Heart right ventricle (tissue), 16 donors: ENCODE measurements at regions of chr1 and their contacts with region 1.

Region 1: DNA sequence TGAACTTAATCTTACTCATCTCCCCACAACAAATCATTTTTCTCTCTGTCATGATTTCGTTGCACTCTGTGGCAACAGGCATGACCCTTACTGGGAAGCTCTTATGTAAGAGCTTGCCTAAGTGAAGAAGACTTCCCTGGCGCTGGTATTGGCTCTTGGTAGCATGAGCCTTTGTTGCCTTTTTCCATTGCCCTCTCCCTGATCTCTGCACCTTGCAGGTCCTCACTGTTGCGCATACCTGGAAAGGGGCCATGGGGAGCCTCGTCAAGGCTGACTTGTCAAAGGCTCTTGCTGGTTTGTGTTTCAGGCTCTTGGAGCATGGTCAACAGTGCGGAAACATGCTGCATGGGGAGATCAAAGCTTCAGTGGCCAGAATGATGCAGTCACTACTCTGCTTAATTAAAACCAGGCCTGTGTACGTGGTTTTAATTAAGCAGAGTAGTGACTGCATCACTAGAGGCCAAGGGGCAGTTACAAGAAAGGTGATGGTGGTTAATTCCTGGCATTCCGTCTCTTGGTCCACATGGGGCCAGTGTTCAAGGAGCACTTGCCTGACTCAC is 141.3 kb downstream of the SPATA46 start:
- DNase-seq: no peak
- ATAC-seq: no peak
- H3K4me3 ChIP-seq: no peak overlapping the region
- H3K27ac ChIP-seq: no peak overlapping the region
- H3K4me1 ChIP-seq: peaks cover 0 to 21% (median 5%) of the 10 kb centered on the region in 9 donors
- H3K27me3 ChIP-seq: no peaks in the 10 kb centered on the region
- CTCF ChIP-seq: no peak

Region 2: DNA sequence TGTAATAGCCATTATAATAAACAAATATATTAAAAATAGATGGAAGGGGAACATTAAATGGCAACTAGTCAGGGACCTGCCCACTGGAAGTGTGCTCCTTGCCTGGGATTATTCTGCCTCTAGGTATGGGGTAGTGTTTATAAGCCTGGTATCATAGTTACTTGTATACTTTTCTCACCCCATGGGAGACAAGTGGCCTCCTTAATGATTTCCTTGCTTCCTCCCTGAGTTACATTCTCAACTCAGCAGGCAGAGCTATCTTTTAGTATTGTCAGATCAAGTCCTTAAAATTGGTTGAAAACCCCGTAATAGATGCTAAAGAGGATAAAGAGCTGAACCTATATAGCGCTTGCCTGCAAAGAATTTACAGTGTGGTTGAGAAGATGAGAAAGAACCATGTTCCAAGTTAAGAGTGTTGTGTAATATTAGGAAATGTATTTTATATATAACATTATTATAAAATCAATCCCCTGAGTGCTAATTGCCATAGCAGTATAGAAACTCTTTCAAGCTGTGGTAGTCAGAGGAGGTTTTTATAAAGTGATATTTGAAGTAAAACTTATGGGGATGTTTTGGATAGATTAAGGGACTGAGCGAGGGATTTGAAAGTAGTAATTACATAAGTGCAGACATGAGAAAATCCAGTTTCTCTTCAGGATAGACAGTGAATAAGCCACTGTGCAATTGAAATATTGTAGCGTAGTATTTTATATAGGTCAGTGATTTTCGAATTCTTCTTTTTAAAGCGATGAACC is 34.9 kb after region 1 on chr1:
- intact Hi-C with region 1: loop called in 1 of 10 experiments (anchors 5 kb)
- DNase-seq: no peak
- ATAC-seq: no peak
- H3K4me3 ChIP-seq: no peak overlapping the region
- H3K27ac ChIP-seq: no peak overlapping the region
- H3K4me1 ChIP-seq: no peaks in the 10 kb centered on the region
- H3K27me3 ChIP-seq: no peaks in the 10 kb centered on the region
- CTCF ChIP-seq: no peak